ENCODE measurements at regions of chr18 and their contacts with region 1.

Region 1: GRCh38 chr18:48940854-48941611 is 9.7 kb downstream of the SMAD7 start:
- DNase-seq: peak; percentile 94
- ATAC-seq: peak; percentile 89
- H3K4me3 Mint-ChIP-seq: peak overlapping the region; percentile 69
- H3K27ac Mint-ChIP-seq: peak overlapping the region; percentile 91
- H3K4me1 Mint-ChIP-seq: peaks cover 91% of the 10 kb centered on the region
- H3K27me3 Mint-ChIP-seq: no peaks in the 10 kb centered on the region
- CTCF ChIP-seq: no peak

Region 2: DNA sequence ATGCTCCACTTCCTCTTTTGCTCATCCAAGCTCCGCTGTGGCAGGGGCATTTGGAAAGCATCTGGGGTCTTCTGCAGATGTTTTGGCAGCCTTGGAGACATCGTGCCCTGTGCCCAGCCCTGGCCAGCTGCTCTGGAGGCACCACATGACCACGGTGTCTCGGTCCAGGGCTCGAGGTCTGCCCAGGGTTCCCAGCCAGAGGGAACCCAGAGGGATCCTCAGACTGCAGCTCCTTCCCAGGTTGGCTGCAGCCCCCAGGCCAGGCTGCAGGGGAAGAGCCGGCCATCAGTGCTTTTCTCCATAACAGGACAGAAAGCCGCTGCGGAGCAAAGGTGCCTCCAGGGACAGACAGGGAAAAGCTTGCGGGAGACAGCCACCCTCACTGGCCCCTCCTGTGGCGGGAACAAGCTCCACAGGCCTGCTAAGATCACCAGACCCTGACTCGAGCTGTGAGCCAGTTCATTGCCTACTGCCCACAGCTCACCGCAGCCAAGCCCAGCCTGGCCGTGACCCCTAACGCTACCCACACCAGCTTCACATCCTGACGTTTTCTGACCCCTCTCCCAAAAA is 65.0 kb before region 1 on chr18:
- CTCF ChIA-PET with region 1: no interaction called
- POLR2A ChIA-PET with region 1: no interaction called
- intact Hi-C with region 1: no loop called
- DNase-seq: no peak
- ATAC-seq: no peak
- H3K4me3 Mint-ChIP-seq: no peak overlapping the region
- H3K27ac Mint-ChIP-seq: no peak overlapping the region
- H3K4me1 Mint-ChIP-seq: peaks cover 16% of the 10 kb centered on the region
- H3K27me3 Mint-ChIP-seq: no peaks in the 10 kb centered on the region
- CTCF ChIP-seq: no peak

Region 3: GRCh38 chr18:48922801-48923730 is 18.0 kb before region 1 on chr18:
- CTCF ChIA-PET with region 1: no interaction called
- POLR2A ChIA-PET with region 1: interaction called, 11 read pairs
- intact Hi-C with region 1: no loop called
- DNase-seq: no peak
- ATAC-seq: no peak
- H3K4me3 Mint-ChIP-seq: peak overlapping the region; percentile 56
- H3K27ac Mint-ChIP-seq: peak overlapping the region; percentile 88
- H3K4me1 Mint-ChIP-seq: peaks cover 61% of the 10 kb centered on the region
- H3K27me3 Mint-ChIP-seq: no peaks in the 10 kb centered on the region
- CTCF ChIP-seq: no peak

Measured in activated CD8-positive, alpha-beta T cell treated with anti-CD3 and anti-CD28 coated beads for 36 hours (primary cell).